Endothelial cell of umbilical vein (primary cell): ENCODE measurements at regions of chr4 and their contacts with region 1.

Region 1: DNA sequence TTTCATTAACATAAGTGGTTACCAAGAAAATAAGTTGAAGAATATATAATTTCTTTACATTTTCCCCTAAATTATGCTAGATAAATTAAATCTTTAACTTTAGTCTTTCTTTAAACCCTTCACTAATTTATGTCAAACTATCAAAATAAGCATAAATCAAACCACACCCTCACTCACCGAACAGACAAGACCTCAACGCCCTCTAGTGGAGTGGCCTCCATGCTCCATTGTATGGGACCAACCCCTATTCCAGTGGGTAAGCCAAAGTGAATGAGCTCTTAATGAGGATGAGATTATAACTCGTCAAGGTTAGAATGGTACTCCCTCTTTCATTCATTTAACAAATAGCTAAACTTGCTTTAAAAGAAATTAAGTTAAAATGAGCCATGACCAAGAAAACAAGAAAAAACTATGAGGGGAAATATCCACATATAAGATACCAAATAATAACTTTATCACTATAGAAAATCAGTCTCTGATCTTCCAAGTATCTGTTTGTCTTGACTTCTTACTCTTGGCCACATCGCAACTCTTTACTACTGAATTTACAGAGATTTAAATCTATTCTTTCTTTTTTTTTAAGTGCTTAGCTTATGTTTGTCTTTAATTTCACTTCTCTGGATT is 15.6 kb upstream of the BBS12 start:
- DNase-seq: peak; percentile 65
- H3K4me3 ChIP-seq: no peak overlapping the region
- H3K27ac ChIP-seq: no peak overlapping the region
- H3K4me1 ChIP-seq: peaks cover 8% of the 10 kb centered on the region
- H3K27me3 ChIP-seq: no peaks in the 10 kb centered on the region
- CTCF ChIP-seq: peak; percentile 80 to 93
- POLR2A ChIP-seq: no peak

Region 2: DNA sequence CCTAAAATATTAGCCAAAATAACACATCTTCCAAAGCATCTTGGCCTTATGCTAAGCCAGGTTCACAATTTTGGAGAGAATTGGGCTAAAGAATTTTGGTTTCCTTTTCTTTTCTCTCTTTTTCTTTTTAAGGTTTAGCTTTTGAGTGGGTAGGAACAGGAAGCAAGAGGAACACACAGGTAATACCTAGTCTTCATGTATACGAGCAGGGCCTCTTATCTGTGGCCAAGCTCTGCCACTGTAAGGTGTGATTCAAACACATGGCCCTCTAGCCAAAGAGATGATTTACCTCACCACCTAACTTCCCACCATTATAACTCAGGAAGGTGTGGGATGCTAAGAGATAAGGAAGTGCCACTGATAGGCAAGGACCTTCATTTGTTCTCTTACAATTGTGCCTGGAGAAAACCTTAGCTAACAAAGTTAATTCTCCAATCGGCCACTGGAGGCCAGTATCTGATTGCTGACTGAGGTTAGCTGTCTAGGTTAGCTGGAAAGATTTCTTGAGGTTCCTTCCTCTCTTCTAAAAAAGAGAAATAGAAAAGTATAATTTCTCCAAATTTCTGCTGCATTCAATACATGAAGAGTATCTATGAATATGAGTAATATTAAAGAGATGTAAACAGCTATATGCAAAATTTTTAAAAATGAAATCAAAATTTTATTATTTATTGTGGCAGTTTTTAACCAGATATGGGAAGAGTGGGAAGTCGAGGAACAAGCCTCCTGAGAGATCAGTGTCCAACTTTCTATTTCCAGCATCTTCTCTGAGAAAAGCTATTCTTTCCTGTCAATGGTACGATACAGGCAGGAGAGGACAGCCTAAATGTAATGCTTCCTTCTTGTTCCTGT is 816.6 kb before region 1 on chr4:
- CTCF ChIA-PET with region 1: interaction called, 12 read pairs
- POLR2A ChIA-PET with region 1: no interaction called
- dilution Hi-C with region 1: no loop called
- intact Hi-C with region 1: loop called (anchors 5 kb)
- DNase-seq: peak; percentile 61
- H3K4me3 ChIP-seq: no peak overlapping the region
- H3K27ac ChIP-seq: no peak overlapping the region
- H3K4me1 ChIP-seq: no peaks in the 10 kb centered on the region
- H3K27me3 ChIP-seq: peaks cover 2 to 13% of the 10 kb centered on the region in 2 experiments
- CTCF ChIP-seq: peak; percentile 50 to 57
- POLR2A ChIP-seq: no peak

Region 3: DNA sequence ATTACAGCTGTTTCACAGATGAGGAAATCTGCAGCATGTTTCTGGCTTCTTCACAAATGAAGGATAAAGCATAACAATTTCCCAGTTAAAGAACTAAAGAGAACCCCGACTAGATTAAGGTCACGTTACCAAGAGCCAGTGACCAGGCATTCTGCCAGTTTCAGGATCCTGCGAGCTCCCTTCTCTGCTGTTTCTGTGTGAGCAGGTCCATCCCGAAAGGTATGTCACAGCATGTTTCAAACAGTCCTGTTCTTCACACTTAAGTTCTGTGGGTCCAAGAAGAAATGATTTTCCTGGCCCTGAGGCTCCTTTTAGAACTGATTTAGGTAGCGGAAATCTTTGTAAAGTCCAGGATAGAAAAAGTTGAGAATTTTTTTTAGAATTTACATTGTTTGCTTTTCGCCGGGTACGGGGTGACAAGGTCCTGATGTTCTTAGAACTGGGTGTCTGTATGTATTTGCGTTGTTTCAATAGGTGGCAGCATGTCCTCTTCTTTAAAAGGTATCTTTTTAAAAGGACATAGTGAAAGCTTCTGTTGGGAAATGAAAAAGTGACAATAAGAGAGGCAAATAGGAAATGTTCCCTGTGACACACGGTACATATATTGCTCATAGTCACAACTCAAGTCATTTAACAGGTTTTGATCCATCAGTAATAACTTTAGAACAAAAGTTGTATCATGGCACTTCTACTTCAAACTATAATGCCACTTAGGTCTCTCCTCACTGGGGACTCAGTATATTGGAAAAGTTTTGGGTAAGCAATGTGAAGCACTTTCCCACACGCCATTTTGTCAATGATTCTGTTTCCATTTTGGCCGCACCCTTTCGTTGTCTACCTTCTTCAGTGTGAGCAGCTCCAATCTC is 114.4 kb before region 1 on chr4:
- CTCF ChIA-PET with region 1: interaction called, 84 read pairs
- POLR2A ChIA-PET with region 1: no interaction called
- dilution Hi-C with region 1: no loop called
- intact Hi-C with region 1: loop called (anchors 1 kb)
- DNase-seq: peak; percentile 58
- H3K4me3 ChIP-seq: no peak overlapping the region
- H3K27ac ChIP-seq: no peak overlapping the region
- H3K4me1 ChIP-seq: no peaks in the 10 kb centered on the region
- H3K27me3 ChIP-seq: peaks cover 10 to 14% of the 10 kb centered on the region in 2 experiments
- CTCF ChIP-seq: peak; percentile 15 to 16
- POLR2A ChIP-seq: no peak

Region 4: GRCh38 chr4:122658818-122659295 is 58.1 kb before region 1 on chr4:
- CTCF ChIA-PET with region 1: interaction called, 10 read pairs
- POLR2A ChIA-PET with region 1: no interaction called
- dilution Hi-C with region 1: no loop called
- intact Hi-C with region 1: no loop called
- DNase-seq: no peak
- H3K4me3 ChIP-seq: no peak overlapping the region
- H3K27ac ChIP-seq: no peak overlapping the region
- H3K4me1 ChIP-seq: peaks cover 2% of the 10 kb centered on the region
- H3K27me3 ChIP-seq: peaks cover 0 to 5% of the 10 kb centered on the region in 2 experiments
- CTCF ChIP-seq: no peak
- POLR2A ChIP-seq: no peak

Region 5: GRCh38 chr4:122673252-122673651 is 43.7 kb before region 1 on chr4:
- CTCF ChIA-PET with region 1: interaction called, 16 read pairs
- POLR2A ChIA-PET with region 1: no interaction called
- dilution Hi-C with region 1: no loop called
- intact Hi-C with region 1: loop called (anchors 2 kb)
- DNase-seq: no peak
- H3K4me3 ChIP-seq: no peak overlapping the region
- H3K27ac ChIP-seq: peak overlapping the region; percentile 36
- H3K4me1 ChIP-seq: peaks cover 38% of the 10 kb centered on the region
- H3K27me3 ChIP-seq: no peaks in the 10 kb centered on the region
- CTCF ChIP-seq: no peak
- POLR2A ChIP-seq: no peak

Region 6: GRCh38 chr4:122732329-122733026 is 15.5 kb after region 1 on chr4 and contains the start of gene BBS12:
- CTCF ChIA-PET with region 1: interaction called, 33 read pairs
- POLR2A ChIA-PET with region 1: no interaction called
- dilution Hi-C with region 1: no loop called
- intact Hi-C with region 1: no loop called
- DNase-seq: peak; percentile 100
- H3K4me3 ChIP-seq: peak within 1 kb of the TSS; percentile 62 to 84 (median 82)
- H3K27ac ChIP-seq: peak within 1 kb of the TSS; percentile 83
- H3K4me1 ChIP-seq: peaks cover 7% of the 10 kb centered on the region
- H3K27me3 ChIP-seq: no peaks in the 10 kb centered on the region
- CTCF ChIP-seq: peak; percentile 34 to 62
- POLR2A ChIP-seq: no peak
- total RNA-seq, gene BBS12: 2.1 and 2.3 TPM in 2 replicates

Region 7: DNA sequence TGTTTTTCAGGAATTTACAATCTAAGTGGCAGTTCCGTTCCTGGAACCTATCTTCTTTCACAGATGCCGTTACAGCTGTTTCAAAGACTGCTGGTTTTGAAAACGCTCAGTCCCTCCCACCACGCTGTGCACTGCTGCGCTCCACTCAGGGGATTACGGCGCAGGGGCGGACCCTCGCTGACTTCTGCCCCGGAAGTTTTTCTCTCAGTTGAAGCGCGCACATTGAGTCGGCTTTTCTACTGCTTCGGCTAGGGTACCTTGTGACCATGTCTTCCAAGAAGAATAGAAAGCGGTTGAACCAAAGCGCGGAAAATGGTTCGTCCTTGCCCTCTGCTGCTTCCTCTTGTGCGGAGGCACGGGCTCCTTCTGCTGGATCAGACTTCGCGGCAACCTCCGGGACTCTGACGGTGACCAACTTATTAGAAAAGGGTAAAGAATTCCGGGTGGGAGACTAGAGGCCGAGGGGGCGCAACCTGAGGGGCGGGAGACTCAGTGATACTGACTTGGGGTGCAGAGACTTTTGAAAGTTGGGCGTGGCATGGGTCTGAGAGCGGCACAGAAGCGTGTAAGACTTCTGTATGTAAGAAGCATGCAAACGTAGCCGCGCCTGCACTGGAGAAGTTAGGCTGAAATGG is 206.1 kb after region 1 on chr4:
- CTCF ChIA-PET with region 1: interaction called, 12 read pairs
- POLR2A ChIA-PET with region 1: no interaction called
- dilution Hi-C with region 1: no loop called
- intact Hi-C with region 1: no loop called
- DNase-seq: peak; percentile 92
- H3K4me3 ChIP-seq: peak overlapping the region; percentile 75 to 90 (median 81)
- H3K27ac ChIP-seq: peak overlapping the region; percentile 26
- H3K4me1 ChIP-seq: peaks cover 18% of the 10 kb centered on the region
- H3K27me3 ChIP-seq: no peaks in the 10 kb centered on the region
- CTCF ChIP-seq: no peak
- POLR2A ChIP-seq: peak; percentile 41

Region 8: GRCh38 chr4:122992057-122992456 is 275.1 kb after region 1 on chr4:
- CTCF ChIA-PET with region 1: no interaction called
- POLR2A ChIA-PET with region 1: no interaction called
- dilution Hi-C with region 1: no loop called
- intact Hi-C with region 1: no loop called
- DNase-seq: peak; percentile 85
- H3K4me3 ChIP-seq: no peak overlapping the region
- H3K27ac ChIP-seq: no peak overlapping the region
- H3K4me1 ChIP-seq: no peaks in the 10 kb centered on the region
- H3K27me3 ChIP-seq: no peaks in the 10 kb centered on the region
- CTCF ChIP-seq: no peak
- POLR2A ChIP-seq: no peak

Region 9: DNA sequence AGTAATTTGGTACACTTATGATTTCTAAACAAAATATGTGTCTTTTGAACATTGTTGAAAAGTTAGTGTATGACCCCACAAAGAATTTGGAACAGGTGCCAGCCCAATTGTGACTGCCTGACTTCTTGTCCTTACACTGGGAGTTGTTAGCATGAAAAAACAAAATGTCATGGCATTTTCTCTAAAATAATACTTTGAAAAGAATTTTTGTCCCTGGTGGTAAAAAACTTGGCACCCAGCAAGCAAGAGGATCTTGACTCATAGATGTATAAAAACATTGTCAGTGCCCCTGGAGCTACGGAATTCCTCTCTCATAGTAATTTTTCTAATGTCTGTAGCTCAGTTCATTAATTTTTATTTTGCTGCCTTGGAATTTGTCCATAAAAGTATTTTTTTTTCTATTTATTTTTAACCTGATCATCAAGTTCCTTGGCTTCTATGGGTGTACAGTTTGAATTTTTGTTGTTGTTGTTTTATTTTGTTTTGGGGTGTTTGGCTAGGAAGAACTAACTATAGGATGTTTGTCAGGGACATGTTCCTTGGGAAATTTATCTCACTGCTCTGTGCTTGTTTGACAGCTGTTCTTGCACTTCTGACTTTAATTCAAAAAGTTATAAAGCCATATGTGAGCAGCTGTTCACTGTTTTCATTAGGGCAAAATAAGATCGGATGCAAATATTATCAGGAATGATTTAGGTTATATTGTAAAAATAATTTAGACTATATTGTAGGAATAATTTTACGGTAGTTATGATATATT is 300.9 kb after region 1 on chr4:
- CTCF ChIA-PET with region 1: no interaction called
- POLR2A ChIA-PET with region 1: no interaction called
- dilution Hi-C with region 1: no loop called
- intact Hi-C with region 1: no loop called
- DNase-seq: peak; percentile 76
- H3K4me3 ChIP-seq: no peak overlapping the region
- H3K27ac ChIP-seq: peak overlapping the region; percentile 67
- H3K4me1 ChIP-seq: peaks cover 13% of the 10 kb centered on the region
- H3K27me3 ChIP-seq: no peaks in the 10 kb centered on the region
- CTCF ChIP-seq: no peak
- POLR2A ChIP-seq: no peak